Activated naive CD4-positive, alpha-beta T cell treated with anti-CD3 and anti-CD28 coated beads for 36 hours (primary cell): ENCODE measurements at regions of chr13 and their contacts with region 1.

Region 1: GRCh38 chr13:74026753-74027152 is 107.5 kb downstream of the KLF12 start:
- DNase-seq: peak; percentile 86
- H3K4me3 Mint-ChIP-seq: peak overlapping the region; percentile 72
- H3K27ac Mint-ChIP-seq: peak overlapping the region; percentile 87
- H3K4me1 Mint-ChIP-seq: peaks cover 80% of the 10 kb centered on the region
- H3K27me3 Mint-ChIP-seq: no peaks in the 10 kb centered on the region

Region 2: DNA sequence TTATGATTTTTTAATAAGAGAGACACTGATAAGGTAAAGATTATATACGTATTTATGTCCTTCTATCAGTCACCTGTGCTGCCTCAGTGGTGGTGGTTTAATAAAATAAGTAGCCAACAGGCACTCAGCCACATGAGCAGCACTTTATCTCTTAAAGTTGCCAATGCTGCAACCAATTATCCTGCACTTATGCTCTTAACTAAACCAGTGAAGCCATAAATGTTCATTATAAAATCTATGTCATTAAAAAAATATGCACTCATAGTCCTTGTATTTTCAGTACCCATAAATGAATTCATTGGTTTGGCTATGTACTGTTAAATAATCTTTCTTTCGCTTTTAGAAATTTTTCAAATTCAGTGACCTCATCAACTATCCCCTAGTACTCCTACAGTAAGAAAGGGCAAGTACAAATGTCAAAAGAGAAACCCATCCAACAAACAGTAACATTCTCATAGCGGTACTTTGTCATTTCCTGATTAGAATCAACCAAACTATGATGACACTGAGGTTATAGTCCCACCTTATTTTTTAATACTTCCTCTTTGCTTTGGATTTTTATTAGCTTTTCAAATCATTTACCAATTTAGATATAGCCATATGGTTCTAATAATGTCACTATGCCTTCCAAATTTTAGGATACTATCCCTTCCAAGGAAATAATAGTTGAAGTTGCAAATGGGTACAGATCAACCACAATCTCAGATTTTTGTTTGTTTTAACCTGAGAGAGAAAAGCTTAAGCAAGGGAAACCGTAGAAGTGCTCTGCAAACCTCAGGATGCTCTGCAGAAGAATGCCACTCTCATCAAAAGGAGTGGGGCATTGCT is 83.4 kb before region 1 on chr13:
- CTCF ChIA-PET with region 1: no interaction called
- intact Hi-C with region 1: loop called (anchors 1 kb)
- DNase-seq: no peak
- H3K4me3 Mint-ChIP-seq: peak overlapping the region; percentile 33
- H3K27ac Mint-ChIP-seq: peak overlapping the region; percentile 74
- H3K4me1 Mint-ChIP-seq: peaks cover 74% of the 10 kb centered on the region
- H3K27me3 Mint-ChIP-seq: no peaks in the 10 kb centered on the region

Region 3: DNA sequence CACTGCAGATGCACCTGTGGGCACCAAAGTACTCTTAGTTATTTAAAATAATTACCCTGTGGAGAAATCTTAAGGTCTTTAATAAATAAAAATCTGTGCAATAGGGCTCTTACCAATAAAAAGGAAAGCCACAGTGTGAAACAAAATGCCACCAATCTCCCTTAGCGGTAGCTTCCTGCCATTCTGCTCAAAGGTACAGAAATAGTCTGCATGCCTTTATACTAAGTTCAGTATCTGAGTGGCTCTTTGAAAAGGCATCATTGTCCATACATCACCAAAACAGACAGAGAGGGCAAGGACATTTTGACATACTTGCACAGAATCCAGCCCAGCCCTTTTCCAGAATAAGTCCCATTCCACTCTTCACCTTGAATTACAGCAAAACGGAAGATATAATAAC is 53.6 kb before region 1 on chr13:
- CTCF ChIA-PET with region 1: no interaction called
- intact Hi-C with region 1: no loop called
- DNase-seq: no peak
- H3K4me3 Mint-ChIP-seq: no peak overlapping the region
- H3K27ac Mint-ChIP-seq: no peak overlapping the region
- H3K4me1 Mint-ChIP-seq: peaks cover 54% of the 10 kb centered on the region
- H3K27me3 Mint-ChIP-seq: no peaks in the 10 kb centered on the region

Region 4: GRCh38 chr13:74062933-74063332 is 36.2 kb after region 1 on chr13:
- CTCF ChIA-PET with region 1: no interaction called
- intact Hi-C with region 1: loop called (anchors 1 kb)
- DNase-seq: peak; percentile 62
- H3K4me3 Mint-ChIP-seq: peak overlapping the region; percentile 73
- H3K27ac Mint-ChIP-seq: peak overlapping the region; percentile 86
- H3K4me1 Mint-ChIP-seq: peaks cover 78% of the 10 kb centered on the region
- H3K27me3 Mint-ChIP-seq: no peaks in the 10 kb centered on the region

Region 5: DNA sequence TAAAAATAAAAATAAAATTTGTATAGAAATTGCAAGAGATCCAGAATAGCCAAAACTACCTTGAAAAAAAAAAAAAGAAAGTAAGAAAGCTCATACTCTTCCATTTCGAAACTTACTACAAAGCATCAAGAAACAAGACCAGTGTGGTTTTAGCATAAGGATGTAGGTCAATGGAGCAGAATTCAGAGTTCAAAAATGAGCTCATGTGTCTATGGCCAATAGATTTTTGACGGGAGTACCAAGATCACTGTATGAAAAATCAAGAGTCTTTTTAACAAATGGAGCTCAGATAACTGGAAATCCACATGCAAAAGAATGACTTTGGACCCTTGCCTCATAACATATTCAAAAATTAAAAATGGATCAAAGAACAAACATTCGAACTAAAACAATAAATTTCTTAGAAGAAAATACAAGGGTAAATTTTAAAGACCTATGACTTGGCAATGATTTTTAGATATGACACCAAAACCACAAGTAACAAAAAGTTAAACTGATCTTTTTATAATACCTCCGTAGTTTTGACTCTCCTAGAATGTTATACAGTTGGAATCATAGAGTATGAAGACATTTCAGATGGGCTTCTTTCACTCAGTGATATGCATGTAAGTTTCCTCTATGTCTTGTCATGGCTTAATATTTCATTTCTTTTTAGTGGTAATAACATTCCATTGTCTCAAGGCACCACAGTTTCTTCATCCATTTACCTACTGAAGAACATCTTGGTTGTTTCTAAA is 64.3 kb after region 1 on chr13:
- CTCF ChIA-PET with region 1: interaction called, 3 read pairs
- intact Hi-C with region 1: loop called (anchors 2 kb)
- DNase-seq: no peak
- H3K4me3 Mint-ChIP-seq: peak overlapping the region; percentile 35
- H3K27ac Mint-ChIP-seq: peak overlapping the region; percentile 56
- H3K4me1 Mint-ChIP-seq: peaks cover 66% of the 10 kb centered on the region
- H3K27me3 Mint-ChIP-seq: no peaks in the 10 kb centered on the region